Activated B cell treated with CpG ODN at 0.5 μM for 24 hours (primary cell): ENCODE measurements at regions of chr1 and their contacts with region 1.

Region 1: GRCh38 chr1:235011599-235012435 is 116.8 kb downstream of the TOMM20 start:
- DNase-seq: peak; percentile 79
- ATAC-seq: peak; percentile 77
- H3K4me3 Mint-ChIP-seq: peak overlapping the region; percentile 47
- H3K27ac Mint-ChIP-seq: peak overlapping the region; percentile 99
- H3K4me1 Mint-ChIP-seq: peaks cover 94% of the 10 kb centered on the region
- H3K27me3 Mint-ChIP-seq: no peaks in the 10 kb centered on the region
- CTCF ChIP-seq: no peak

Region 2: DNA sequence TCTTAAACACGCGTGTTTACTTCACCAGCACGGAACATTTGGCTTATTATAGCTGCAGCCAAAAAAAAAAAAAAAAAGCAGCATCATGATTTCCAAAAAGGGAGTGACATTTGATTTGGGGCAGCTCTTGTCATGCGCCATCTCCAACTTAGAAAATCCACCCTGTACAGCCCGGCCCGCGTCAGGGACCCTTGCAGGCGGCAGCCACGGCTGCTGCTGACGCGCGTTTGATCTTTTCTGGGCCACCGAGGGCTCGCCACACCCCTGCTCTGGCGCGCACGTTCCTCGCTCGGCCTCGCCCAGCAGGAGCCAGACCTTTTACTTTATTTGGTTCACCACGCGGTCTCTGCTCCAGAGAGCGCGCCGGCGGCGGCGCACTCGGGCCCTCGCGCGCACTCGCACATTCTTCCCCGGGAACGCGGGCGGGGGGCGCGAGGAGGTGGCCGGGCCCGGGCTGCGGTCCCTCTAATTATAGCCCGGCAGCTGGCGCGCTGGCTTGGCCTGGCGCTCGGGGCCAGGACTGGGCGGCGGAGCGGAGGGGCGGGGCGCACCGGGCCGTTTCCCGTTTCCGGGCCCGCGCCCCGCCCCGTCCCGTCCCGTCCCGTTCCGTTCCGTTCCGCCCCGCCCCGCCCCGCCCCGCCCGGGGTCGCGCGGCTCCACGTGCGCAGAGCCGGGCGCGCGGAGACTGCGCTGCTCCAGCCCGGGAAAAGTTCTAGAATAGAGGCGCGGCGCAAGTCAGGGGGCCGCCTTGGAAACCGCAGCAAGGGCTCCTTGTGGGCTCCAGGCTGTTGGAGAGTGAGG is 412.0 kb before region 1 on chr1:
- CTCF ChIA-PET with region 1: interaction called, 4 read pairs
- POLR2A ChIA-PET with region 1: interaction called, 49 read pairs
- intact Hi-C with region 1: loop called (anchors 2 kb)
- DNase-seq: peak; percentile 67
- ATAC-seq: peak; percentile 73
- H3K4me3 Mint-ChIP-seq: peak overlapping the region; percentile 86
- H3K27ac Mint-ChIP-seq: peak overlapping the region; percentile 89
- H3K4me1 Mint-ChIP-seq: peaks cover 66% of the 10 kb centered on the region
- H3K27me3 Mint-ChIP-seq: no peaks in the 10 kb centered on the region
- CTCF ChIP-seq: no peak

Region 3: DNA sequence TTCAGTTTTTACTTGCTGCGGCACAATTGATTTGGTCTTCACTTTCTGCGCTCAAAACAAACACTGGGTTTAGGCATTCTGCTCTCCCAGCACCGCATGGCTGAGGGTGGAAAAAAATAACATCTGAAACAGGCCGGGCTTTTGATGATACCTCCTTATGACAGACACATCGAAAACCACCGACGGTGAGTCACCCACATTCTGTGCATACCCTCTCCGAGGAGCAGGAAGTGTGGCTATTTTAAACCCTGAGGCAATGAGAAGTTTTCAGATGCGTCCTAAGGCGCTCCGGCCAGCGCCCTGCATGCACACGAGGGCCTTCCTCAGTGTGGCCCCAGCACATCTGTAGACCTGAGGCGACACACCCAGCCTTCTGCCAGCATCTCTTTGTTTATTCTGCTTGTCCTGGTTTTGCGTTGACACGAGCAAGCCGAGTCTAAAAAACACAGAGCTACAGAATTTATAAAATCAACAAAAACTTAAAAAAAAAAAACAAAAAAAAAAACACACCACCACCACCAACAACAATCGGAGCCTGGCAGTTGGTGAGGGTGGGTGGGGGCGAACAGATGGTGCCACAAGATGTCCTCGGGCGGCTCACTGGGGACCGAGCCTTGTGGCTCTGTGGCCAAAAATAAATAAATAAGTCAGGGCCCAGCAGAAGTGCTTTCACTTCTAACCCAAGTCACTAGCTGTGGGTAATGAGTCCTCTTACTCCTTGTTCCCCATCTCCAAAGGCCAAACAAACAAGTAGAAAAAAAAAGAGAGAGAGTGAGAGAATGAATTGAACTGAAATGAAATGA is 239.3 kb before region 1 on chr1:
- CTCF ChIA-PET with region 1: no interaction called
- POLR2A ChIA-PET with region 1: interaction called, 31 read pairs
- intact Hi-C with region 1: loop called (anchors 1 kb)
- DNase-seq: peak; percentile 66
- ATAC-seq: peak; percentile 81
- H3K4me3 Mint-ChIP-seq: peak overlapping the region; percentile 77
- H3K27ac Mint-ChIP-seq: peak overlapping the region; percentile 96
- H3K4me1 Mint-ChIP-seq: peaks cover 57% of the 10 kb centered on the region
- H3K27me3 Mint-ChIP-seq: no peaks in the 10 kb centered on the region
- CTCF ChIP-seq: no peak

Region 4: DNA sequence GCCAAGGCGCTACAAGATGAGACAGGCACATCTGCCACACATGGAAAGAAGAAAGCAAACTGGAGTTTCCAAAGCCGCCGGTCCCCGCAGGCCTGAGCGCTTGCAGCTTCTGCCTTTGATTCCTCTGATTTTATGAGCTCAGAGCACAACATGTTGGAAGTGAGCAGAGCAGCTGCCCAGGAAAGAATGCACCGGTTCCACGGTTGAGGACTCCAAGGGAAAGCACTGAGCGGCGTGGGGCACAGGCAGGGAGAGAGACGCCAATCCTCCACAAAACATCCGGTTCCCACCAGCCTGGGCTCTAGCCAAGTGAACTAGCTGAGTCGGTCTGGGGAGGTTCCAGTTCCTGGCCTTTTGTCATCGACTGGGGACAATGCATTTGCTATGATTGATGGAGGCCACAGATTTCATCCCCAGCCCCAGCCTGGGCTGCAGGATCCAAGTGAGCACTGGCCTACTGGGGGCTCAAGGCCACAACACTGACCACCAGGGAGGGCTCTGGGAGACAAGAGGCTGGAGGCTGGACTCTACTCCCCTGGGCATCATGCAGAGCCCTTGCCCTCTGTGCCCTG is 148.8 kb before region 1 on chr1:
- CTCF ChIA-PET with region 1: no interaction called
- POLR2A ChIA-PET with region 1: no interaction called
- intact Hi-C with region 1: no loop called
- DNase-seq: no peak
- ATAC-seq: no peak
- H3K4me3 Mint-ChIP-seq: no peak overlapping the region
- H3K27ac Mint-ChIP-seq: no peak overlapping the region
- H3K4me1 Mint-ChIP-seq: peaks cover 3% of the 10 kb centered on the region
- H3K27me3 Mint-ChIP-seq: no peaks in the 10 kb centered on the region
- CTCF ChIP-seq: no peak

Region 5: GRCh38 chr1:234925440-234926263 is 86.2 kb before region 1 on chr1:
- CTCF ChIA-PET with region 1: interaction called, 3 read pairs
- POLR2A ChIA-PET with region 1: interaction called, 10 read pairs
- intact Hi-C with region 1: loop called (anchors 1 kb)
- DNase-seq: no peak
- ATAC-seq: no peak
- H3K4me3 Mint-ChIP-seq: peak overlapping the region; percentile 78
- H3K27ac Mint-ChIP-seq: peak overlapping the region; percentile 78
- H3K4me1 Mint-ChIP-seq: peaks cover 30% of the 10 kb centered on the region
- H3K27me3 Mint-ChIP-seq: no peaks in the 10 kb centered on the region
- CTCF ChIP-seq: no peak

Region 6: DNA sequence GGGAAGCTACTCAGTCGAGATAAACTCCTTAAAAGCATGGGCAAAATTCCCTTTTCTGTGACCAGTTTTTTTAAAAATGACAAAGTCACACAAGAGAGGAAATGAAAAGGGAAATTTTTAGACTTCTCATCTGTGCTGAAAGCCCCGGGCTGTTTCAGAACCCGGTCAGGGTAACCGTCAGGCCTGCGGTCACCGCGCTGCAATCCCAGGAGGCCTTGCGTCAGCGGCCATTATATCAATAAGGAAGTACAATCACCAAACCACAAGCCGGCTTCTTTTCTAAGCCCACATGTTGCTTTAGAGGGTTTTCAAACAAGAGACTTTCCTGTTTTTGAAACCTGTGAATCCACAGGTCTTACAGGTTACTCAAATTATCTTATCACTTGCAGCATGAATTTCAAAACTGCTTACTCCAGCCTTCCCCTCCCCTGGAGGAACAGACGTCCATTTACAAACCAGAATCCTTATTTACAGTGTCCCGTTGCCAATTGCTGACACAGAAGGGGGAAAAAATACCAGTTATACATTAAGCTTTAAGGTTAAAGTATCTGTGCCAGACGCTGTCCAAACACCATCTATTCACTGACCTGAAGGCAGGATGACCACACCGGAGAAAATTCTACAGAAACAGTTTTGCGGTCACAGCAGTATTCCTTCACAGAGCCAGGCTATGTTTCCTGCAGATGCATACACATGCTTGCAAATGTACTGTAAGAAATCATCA is 48.5 kb before region 1 on chr1:
- CTCF ChIA-PET with region 1: interaction called, 4 read pairs
- POLR2A ChIA-PET with region 1: interaction called, 85 read pairs
- intact Hi-C with region 1: loop called (anchors 1 kb)
- DNase-seq: peak; percentile 84
- ATAC-seq: peak; percentile 89
- H3K4me3 Mint-ChIP-seq: peak overlapping the region; percentile 82
- H3K27ac Mint-ChIP-seq: peak overlapping the region; percentile 98
- H3K4me1 Mint-ChIP-seq: peaks cover 66% of the 10 kb centered on the region
- H3K27me3 Mint-ChIP-seq: no peaks in the 10 kb centered on the region
- CTCF ChIP-seq: no peak

Region 7: DNA sequence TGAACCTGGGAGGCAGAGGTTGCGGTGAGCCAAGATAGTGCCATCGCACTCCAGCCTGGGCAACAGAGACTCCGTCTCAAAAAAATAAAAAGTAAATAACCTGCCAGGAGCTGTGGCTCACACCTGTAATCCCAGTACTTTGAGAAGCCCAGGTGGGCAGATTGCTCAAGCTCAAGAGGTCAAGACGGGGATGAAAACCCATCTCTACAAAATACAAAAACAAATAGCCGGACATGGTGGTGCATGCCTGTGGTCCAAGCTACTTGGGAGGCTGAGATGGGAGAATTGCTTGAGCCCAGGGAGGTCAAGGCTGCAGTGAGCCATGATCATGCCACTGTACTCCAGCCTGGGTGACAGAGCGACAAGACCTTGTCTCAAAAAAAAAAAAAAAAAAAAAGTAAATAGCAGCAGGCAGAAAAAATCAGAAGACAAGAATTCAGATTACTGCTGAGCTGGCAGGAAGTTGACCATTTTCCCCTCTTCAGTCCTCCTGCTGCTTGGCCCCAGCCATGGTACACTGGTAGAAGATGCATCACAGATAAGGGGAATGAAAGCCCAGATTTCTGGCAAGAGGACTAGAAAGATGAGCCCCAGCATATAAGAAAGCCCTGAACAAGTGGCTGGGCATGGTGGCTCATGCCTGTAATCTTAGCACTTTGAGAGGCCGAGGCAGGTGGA is 19.2 kb after region 1 on chr1:
- CTCF ChIA-PET with region 1: no interaction called
- POLR2A ChIA-PET with region 1: interaction called, 13 read pairs
- intact Hi-C with region 1: loop called (anchors 2 kb)
- DNase-seq: no peak
- ATAC-seq: no peak
- H3K4me3 Mint-ChIP-seq: no peak overlapping the region
- H3K27ac Mint-ChIP-seq: no peak overlapping the region
- H3K4me1 Mint-ChIP-seq: peaks cover 16% of the 10 kb centered on the region
- H3K27me3 Mint-ChIP-seq: no peaks in the 10 kb centered on the region
- CTCF ChIP-seq: no peak

Region 8: GRCh38 chr1:235113183-235113917 is 101.5 kb after region 1 on chr1:
- CTCF ChIA-PET with region 1: no interaction called
- POLR2A ChIA-PET with region 1: no interaction called
- intact Hi-C with region 1: no loop called
- DNase-seq: no peak
- ATAC-seq: no peak
- H3K4me3 Mint-ChIP-seq: no peak overlapping the region
- H3K27ac Mint-ChIP-seq: no peak overlapping the region
- H3K4me1 Mint-ChIP-seq: no peaks in the 10 kb centered on the region
- H3K27me3 Mint-ChIP-seq: no peaks in the 10 kb centered on the region
- CTCF ChIP-seq: no peak

Region 9: GRCh38 chr1:235328357-235329138 is 316.7 kb after region 1 on chr1 and contains the start of gene GGPS1:
- CTCF ChIA-PET with region 1: no interaction called
- POLR2A ChIA-PET with region 1: no interaction called
- intact Hi-C with region 1: loop called (anchors 1 kb)
- DNase-seq: peak; percentile 90
- ATAC-seq: peak; percentile 75
- H3K4me3 Mint-ChIP-seq: no peak within 1 kb of the TSS
- H3K27ac Mint-ChIP-seq: no peak within 1 kb of the TSS
- H3K4me1 Mint-ChIP-seq: peaks cover 27% of the 10 kb centered on the region
- H3K27me3 Mint-ChIP-seq: no peaks in the 10 kb centered on the region
- CTCF ChIP-seq: no peak
- total RNA-seq, gene GGPS1: 25.4 and 33.8 TPM in 2 replicates